ENCODE measurements at regions of chr7 and their contacts with region 1.

Region 1: DNA sequence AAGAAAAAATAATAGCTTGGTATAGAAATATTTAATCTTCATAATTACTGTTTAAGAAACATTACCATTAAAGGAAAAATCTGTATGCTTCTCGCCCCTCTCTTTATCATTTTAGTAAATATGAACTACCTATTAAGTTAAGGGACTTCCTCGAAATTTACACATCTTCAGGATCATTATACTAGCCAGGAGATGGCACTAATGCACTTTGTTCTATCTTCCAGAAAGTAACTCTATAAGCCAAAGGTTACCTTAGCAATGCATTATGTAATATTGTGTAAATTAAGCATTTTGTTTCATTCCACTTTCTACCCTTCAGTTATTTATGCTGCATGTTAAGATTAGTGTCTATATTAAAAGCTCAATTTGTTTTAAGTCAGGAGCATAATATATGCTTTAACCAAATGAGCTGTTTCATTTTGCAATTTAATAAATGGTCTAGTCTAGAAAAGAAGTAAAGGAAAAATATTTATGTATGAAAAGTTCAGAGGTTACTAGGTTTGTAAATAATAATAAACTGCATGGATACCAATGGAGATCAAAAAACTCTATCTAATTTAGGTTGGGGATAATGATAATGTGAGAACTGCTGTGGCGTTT is 128.4 kb downstream of the ANKRD7 start:
- DNase-seq: no peak
- ATAC-seq: no peak
- H3K4me3 ChIP-seq: no peak overlapping the region
- H3K27ac ChIP-seq: no peak overlapping the region
- H3K4me1 ChIP-seq: no peaks in the 10 kb centered on the region
- H3K27me3 ChIP-seq: no peaks in the 10 kb centered on the region
- CTCF ChIP-seq: peak in 5 of 9 donors; percentile 16 to 48 (median 40)

Region 2: GRCh38 chr7:118330373-118330772 is 22.6 kb before region 1 on chr7:
- intact Hi-C with region 1: no loop called
- DNase-seq: no peak
- ATAC-seq: no peak
- H3K4me3 ChIP-seq: no peak overlapping the region
- H3K27ac ChIP-seq: no peak overlapping the region
- H3K4me1 ChIP-seq: no peaks in the 10 kb centered on the region
- H3K27me3 ChIP-seq: peaks cover 0 to 24% (median 0%) of the 10 kb centered on the region in 7 donors
- CTCF ChIP-seq: no peak

Region 3: DNA sequence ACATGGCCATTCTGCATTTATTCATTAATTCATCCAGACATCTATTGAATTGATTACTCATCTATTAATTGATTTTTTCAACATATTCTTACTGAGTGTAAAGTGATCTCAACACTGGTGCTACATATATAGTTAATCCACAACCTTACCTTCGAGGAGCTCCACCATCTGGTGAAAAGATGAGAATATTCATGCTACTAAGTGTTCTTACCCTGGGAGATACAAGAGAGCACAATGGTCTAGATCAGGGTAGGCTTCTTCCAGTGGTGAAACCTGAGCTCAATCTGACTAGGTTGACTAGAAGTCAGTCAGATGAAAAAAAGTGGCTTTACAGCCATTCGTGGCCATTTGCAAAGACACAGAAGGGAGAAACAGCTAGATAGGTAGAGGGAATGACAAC is 378.9 kb after region 1 on chr7:
- intact Hi-C with region 1: loop called in 1 of 10 experiments (anchors 5 kb)
- DNase-seq: no peak
- ATAC-seq: peak in 1 of 8 donors; percentile 63
- H3K4me3 ChIP-seq: no peak overlapping the region
- H3K27ac ChIP-seq: no peak overlapping the region
- H3K4me1 ChIP-seq: no peaks in the 10 kb centered on the region
- H3K27me3 ChIP-seq: no peaks in the 10 kb centered on the region
- CTCF ChIP-seq: peak in 3 of 9 donors; percentile 18 to 21 (median 20)

Region 4: DNA sequence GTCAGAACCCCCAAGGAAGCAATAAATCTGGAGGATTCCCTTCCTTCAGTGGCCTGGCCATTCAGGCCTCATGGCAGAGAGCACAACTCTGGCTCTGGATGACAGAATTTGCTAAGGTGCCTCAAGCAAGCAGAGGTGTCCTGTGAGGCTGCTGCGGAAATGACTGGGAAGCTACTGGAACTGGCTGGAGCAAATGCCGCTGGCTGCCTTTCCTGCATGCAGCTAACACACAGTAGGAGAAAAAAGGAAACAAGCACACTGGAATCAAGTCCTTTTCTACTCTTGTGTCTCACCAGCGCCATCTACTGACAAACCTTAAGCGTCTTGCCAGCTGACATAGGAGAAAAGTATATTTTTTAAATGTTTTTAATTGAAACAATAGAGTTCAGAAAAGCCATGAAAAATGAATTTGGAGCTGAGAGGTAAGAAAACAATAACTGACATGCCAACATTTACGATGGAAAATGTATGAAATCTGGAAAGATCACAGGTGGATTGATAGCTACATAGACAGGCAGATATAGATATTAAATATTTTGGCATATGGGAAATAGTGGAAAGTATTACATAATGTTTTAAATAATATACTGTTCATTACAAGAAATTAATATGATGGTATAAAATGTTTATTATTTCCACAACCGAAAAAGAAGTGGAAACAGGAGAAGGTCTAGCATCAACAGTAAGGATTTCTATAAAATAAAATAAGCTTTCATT is 823.1 kb after region 1 on chr7:
- intact Hi-C with region 1: loop called in 4 of 10 experiments (anchors 5 to 10 kb)
- DNase-seq: peak in 1 of 2 donors; percentile 14
- ATAC-seq: no peak
- H3K4me3 ChIP-seq: no peak overlapping the region
- H3K27ac ChIP-seq: no peak overlapping the region
- H3K4me1 ChIP-seq: no peaks in the 10 kb centered on the region
- H3K27me3 ChIP-seq: no peaks in the 10 kb centered on the region
- CTCF ChIP-seq: peak; percentile 9 to 67 (median 62)

Measured in heart right ventricle (tissue), 16 donors.